ENCODE measurements at regions of chr1 and their contacts with region 1.

Region 1: GRCh38 chr1:204859861-204860274 is 10.8 kb upstream of the NFASC start:
- DNase-seq: no peak
- ATAC-seq: peak in 1 of 4 donors; percentile 23
- H3K4me3 ChIP-seq: no peak overlapping the region
- H3K27ac ChIP-seq: no peak overlapping the region
- H3K4me1 ChIP-seq: peaks cover 0 to 25% (median 5%) of the 10 kb centered on the region in 12 donors
- H3K27me3 ChIP-seq: no peaks in the 10 kb centered on the region
- CTCF ChIP-seq: no peak
- POLR2A ChIP-seq: no peak

Region 2: GRCh38 chr1:204806943-204807687 is 52.8 kb before region 1 on chr1:
- intact Hi-C with region 1: loop called in 1 of 10 experiments (anchors 2 kb)
- DNase-seq: peak; percentile 80 to 86 (median 82)
- ATAC-seq: peak; percentile 85 to 96 (median 94)
- H3K4me3 ChIP-seq: peak overlapping the region in 11 of 12 donors; percentile 37 to 63 (median 51)
- H3K27ac ChIP-seq: no peak overlapping the region
- H3K4me1 ChIP-seq: peaks cover 0 to 11% (median 0%) of the 10 kb centered on the region in 12 donors
- H3K27me3 ChIP-seq: no peaks in the 10 kb centered on the region
- CTCF ChIP-seq: peak; percentile 92 to 98 (median 96)
- POLR2A ChIP-seq: no peak

Region 3: DNA sequence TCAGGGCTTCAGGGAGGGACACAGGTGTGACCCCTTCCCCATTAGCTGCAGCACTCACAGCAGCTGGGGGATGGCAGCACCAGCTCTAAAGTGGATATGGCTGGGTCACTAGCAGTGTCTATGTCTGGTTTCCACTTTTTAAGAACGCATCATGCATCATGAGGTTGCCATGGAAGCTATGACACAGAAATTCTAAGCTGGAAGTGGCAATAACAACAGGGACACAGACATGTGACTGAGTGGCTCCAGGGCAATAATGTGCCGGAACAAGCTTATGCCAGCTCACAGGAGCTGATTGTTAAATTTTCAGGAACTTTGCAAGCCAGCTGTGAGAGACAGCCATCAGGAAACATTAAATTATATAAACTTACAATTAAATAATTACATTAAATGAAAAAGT is 40.4 kb before region 1 on chr1:
- intact Hi-C with region 1: loop called in 1 of 10 experiments (anchors 5 kb)
- DNase-seq: no peak
- ATAC-seq: peak in 2 of 4 donors; percentile 10 to 12
- H3K4me3 ChIP-seq: no peak overlapping the region
- H3K27ac ChIP-seq: peak overlapping the region in 6 of 12 donors; percentile 19 to 69 (median 31)
- H3K4me1 ChIP-seq: peaks cover 0 to 51% (median 18%) of the 10 kb centered on the region in 12 donors
- H3K27me3 ChIP-seq: no peaks in the 10 kb centered on the region
- CTCF ChIP-seq: no peak
- POLR2A ChIP-seq: no peak